ENCODE measurements at regions of chr18 and their contacts with region 1.

Region 1: GRCh38 chr18:36015629-36016028 is 43.1 kb downstream of the RMP24 start:
- DNase-seq: no peak
- H3K4me3 ChIP-seq: no peak overlapping the region
- H3K27ac ChIP-seq: no peak overlapping the region
- H3K4me1 ChIP-seq: no peaks in the 10 kb centered on the region
- H3K27me3 ChIP-seq: no peaks in the 10 kb centered on the region
- CTCF ChIP-seq: no peak

Region 2: DNA sequence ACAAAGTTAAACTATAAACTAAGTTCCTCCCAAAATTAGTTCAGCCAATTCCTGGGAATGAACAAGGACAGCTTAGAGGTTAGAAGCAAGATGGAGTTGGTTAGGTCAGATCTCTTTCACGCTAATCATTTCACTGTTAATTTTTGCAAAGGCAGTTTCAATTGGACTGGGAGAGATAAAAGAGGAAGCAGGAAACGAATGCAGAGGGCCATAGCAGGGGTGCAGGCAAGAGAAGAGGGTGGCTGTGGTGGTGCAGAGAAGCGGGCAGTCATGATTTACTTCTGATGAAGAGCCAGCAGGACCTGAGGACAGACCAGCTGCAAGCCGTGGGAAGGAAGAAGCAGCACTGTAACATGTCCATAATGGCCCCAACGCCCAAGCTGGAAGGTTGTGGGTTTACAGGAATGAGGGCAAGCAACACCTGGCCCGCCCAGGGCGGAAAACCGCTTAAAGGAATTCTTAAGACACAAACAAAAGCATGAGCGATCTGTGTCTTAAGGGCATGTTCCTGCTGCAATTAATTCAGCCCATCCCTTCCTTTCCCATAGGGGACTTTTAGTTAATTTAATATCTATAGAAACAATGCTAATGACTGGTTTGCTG is 47.2 kb before region 1 on chr18:
- CTCF ChIA-PET with region 1: no interaction called
- POLR2A ChIA-PET with region 1: no interaction called
- intact Hi-C with region 1: no loop called
- DNase-seq: no peak
- H3K4me3 ChIP-seq: no peak overlapping the region
- H3K27ac ChIP-seq: no peak overlapping the region
- H3K4me1 ChIP-seq: peaks cover 7% of the 10 kb centered on the region
- H3K27me3 ChIP-seq: no peaks in the 10 kb centered on the region
- CTCF ChIP-seq: no peak

Region 3: GRCh38 chr18:36284671-36285295 is 269.2 kb after region 1 on chr18:
- CTCF ChIA-PET with region 1: no interaction called
- POLR2A ChIA-PET with region 1: no interaction called
- intact Hi-C with region 1: loop called (anchors 5 kb)
- DNase-seq: peak; percentile 11 to 41
- H3K4me3 ChIP-seq: no peak overlapping the region
- H3K27ac ChIP-seq: no peak overlapping the region
- H3K4me1 ChIP-seq: no peaks in the 10 kb centered on the region
- H3K27me3 ChIP-seq: no peaks in the 10 kb centered on the region
- CTCF ChIP-seq: peak; percentile 81